Colonic mucosa (tissue), 4 donors: ENCODE measurements at regions of chr4 and their contacts with region 1.

Region 1: GRCh38 chr4:102868781-102869568 is at the start of gene CISD2:
- DNase-seq: peak; percentile 93
- H3K4me3 ChIP-seq: peak within 1 kb of the TSS; percentile 52
- H3K27ac ChIP-seq: peak within 1 kb of the TSS; percentile 97
- H3K4me1 ChIP-seq: no peaks in the 10 kb centered on the region
- H3K27me3 ChIP-seq: no peaks in the 10 kb centered on the region
- CTCF ChIP-seq: no peak
- total RNA-seq, gene CISD2: 30.7 to 41.5 TPM

Region 2: GRCh38 chr4:102826890-102827673 is 41.9 kb before region 1 on chr4 and contains the start of gene UBE2D3:
- intact Hi-C with region 1: loop called (anchors 5 kb)
- DNase-seq: peak; percentile 90
- H3K4me3 ChIP-seq: peak within 1 kb of the TSS; percentile 82
- H3K27ac ChIP-seq: peak within 1 kb of the TSS; percentile 100
- H3K4me1 ChIP-seq: peaks cover 5% of the 10 kb centered on the region
- H3K27me3 ChIP-seq: no peaks in the 10 kb centered on the region
- CTCF ChIP-seq: no peak
- total RNA-seq, gene UBE2D3: 290 to 346 TPM